ENCODE measurements at regions of chr2 and their contacts with region 1.

Region 1: DNA sequence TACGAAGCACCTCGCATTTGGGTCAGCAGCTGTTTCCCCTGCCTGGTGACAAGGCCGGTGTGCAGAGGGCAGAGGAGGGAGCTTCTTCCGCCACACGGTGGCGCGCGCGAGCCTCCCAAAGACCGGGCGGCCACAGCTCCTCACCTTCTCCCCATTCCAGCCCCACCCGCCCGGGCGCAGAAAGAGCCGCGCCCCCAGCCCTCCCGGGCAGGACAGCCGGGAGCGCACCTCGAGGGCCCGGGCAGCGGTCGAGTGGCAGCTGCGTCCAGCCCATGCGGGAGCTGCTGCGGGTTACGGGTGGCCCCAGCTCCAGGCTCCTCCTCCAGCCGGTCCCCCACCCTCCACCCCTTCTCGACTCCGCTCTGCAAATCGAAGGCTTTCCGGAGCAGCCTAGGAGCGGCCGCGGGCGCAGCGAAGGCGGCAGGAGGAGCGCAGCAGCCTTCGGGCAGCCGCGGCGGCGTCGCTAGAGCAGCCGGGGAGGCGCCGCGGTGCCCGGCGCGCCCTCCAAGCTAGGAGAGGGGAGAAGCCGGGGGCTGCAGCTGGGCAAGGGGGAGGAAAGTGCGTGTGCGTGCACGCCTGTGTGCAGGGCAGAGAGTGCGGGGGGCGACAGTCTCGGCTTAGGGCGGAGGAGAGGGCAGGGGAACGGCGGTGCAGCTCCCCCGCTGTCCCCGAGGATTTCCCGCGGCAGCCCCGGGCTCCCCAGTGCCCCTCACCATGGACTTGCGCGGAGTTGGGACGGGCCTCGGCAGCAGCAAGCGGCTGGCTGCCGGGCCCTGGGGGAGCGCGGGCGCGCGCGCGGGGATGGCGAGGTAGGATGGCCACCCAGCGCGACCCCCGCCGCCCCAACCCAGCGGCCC is at the start of gene CCDC85A:
- DNase-seq: peak; percentile 83 to 92 (median 86)
- ATAC-seq: peak; percentile 89 to 95 (median 94)
- H3K4me3 ChIP-seq: peak within 1 kb of the TSS; percentile 61 to 86 (median 74)
- H3K27ac ChIP-seq: peak within 1 kb of the TSS; percentile 69 to 94 (median 85)
- H3K4me1 ChIP-seq: peaks cover 0 to 50% (median 7%) of the 10 kb centered on the region in 12 donors
- H3K27me3 ChIP-seq: peaks cover 0 to 33% (median 3%) of the 10 kb centered on the region in 9 donors
- CTCF ChIP-seq: peak; percentile 88 to 99 (median 95)
- POLR2A ChIP-seq: peak in 1 of 2 donors; percentile 56
- total RNA-seq, gene CCDC85A: 3.3 to 14.2 (median 4.5) TPM

Region 2: GRCh38 chr2:56088411-56088810 is 95.5 kb before region 1 on chr2:
- intact Hi-C with region 1: no loop called
- DNase-seq: no peak
- ATAC-seq: no peak
- H3K4me3 ChIP-seq: no peak overlapping the region
- H3K27ac ChIP-seq: no peak overlapping the region
- H3K4me1 ChIP-seq: no peaks in the 10 kb centered on the region
- H3K27me3 ChIP-seq: no peaks in the 10 kb centered on the region
- CTCF ChIP-seq: no peak
- POLR2A ChIP-seq: no peak

Region 3: DNA sequence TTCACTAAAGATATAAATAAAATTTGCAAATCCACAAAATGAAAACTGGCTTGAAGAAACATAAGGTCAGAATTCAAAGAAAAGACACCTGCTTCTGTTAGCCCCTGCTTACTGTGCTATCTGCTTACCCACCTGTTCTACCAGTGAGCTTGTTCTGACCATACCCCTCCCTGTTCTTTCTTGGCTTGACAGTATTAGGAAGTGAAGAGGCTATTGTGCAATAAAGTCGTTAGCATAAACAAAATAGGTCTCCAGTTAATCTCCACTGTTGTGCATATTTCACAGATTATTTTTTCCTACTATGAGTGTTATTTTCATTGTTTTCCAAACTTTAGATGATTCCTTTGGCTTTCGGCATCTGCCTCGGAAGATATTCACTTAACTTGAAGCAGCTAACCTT is 322.0 kb after region 1 on chr2:
- intact Hi-C with region 1: loop called in 1 of 10 experiments (anchors 10 kb)
- DNase-seq: no peak
- ATAC-seq: no peak
- H3K4me3 ChIP-seq: no peak overlapping the region
- H3K27ac ChIP-seq: no peak overlapping the region
- H3K4me1 ChIP-seq: no peaks in the 10 kb centered on the region
- H3K27me3 ChIP-seq: no peaks in the 10 kb centered on the region
- CTCF ChIP-seq: no peak
- POLR2A ChIP-seq: no peak

Region 4: GRCh38 chr2:56580242-56580641 is 396.4 kb after region 1 on chr2:
- intact Hi-C with region 1: loop called in 1 of 10 experiments (anchors 10 kb)
- DNase-seq: no peak
- ATAC-seq: no peak
- H3K4me3 ChIP-seq: no peak overlapping the region
- H3K27ac ChIP-seq: no peak overlapping the region
- H3K4me1 ChIP-seq: no peaks in the 10 kb centered on the region
- H3K27me3 ChIP-seq: no peaks in the 10 kb centered on the region
- CTCF ChIP-seq: no peak
- POLR2A ChIP-seq: no peak

Region 5: DNA sequence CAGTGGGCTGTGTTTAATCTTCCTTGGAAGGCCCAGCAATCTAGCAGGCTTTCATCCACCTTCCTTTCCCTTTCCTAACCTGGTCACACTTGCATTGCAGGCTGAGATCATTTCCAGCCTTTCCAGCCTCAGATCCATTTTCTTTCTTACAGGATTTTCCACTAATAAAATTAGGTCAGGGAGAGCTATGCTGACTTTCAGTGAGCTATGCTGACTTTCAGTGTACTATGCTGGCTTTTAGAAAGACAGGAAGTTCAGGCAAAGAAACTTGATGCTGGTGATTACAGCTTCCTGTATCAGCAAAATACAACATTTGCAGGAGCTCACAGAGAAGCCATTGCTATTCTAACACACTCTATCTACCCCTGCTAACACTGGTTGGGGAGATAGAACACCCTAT is 734.9 kb after region 1 on chr2:
- intact Hi-C with region 1: no loop called
- DNase-seq: no peak
- ATAC-seq: no peak
- H3K4me3 ChIP-seq: no peak overlapping the region
- H3K27ac ChIP-seq: no peak overlapping the region
- H3K4me1 ChIP-seq: no peaks in the 10 kb centered on the region
- H3K27me3 ChIP-seq: no peaks in the 10 kb centered on the region
- CTCF ChIP-seq: no peak
- POLR2A ChIP-seq: no peak

Region 6: GRCh38 chr2:57497489-57498096 is 1313.7 kb after region 1 on chr2:
- intact Hi-C with region 1: loop called (anchors 1 to 10 kb)
- DNase-seq: peak in 4 of 5 donors; percentile 6 to 26 (median 24)
- ATAC-seq: peak in 2 of 4 donors; percentile 41 to 50
- H3K4me3 ChIP-seq: no peak overlapping the region
- H3K27ac ChIP-seq: no peak overlapping the region
- H3K4me1 ChIP-seq: peaks cover 0 to 12% (median 0%) of the 10 kb centered on the region in 12 donors
- H3K27me3 ChIP-seq: no peaks in the 10 kb centered on the region
- CTCF ChIP-seq: peak; percentile 62 to 80 (median 71)
- POLR2A ChIP-seq: no peak

Region 7: DNA sequence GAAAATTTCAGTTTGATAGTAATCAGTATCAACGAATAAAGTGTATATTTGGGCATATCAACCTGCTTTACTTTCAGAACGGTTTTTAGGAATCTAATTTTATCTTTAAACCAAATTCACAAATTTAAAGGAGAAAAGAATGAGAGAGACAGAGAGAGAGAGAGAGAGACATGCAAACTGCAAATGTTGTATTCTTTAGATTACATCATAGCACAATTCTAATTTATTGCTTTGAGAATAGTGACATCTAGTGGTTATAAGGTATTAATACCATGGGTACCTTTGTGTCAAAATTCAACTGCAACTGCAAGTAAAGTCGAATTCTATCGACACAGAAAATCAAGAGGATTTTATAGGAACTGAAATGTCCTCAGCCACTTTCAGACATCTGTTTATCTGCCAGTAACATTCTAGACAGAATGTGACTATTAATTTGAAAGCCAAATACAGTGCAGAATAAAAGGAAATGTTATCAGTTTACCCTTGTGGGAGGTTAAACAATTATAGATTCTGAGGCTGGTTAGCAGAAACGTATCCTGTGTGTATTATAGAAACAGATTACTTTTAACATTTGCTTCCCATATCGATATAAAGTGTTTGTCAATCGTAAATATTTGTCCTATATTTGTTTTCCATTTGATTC is 1332.9 kb after region 1 on chr2:
- intact Hi-C with region 1: loop called in 3 of 10 experiments (anchors 5 kb)
- DNase-seq: no peak
- ATAC-seq: peak in 1 of 4 donors; percentile 44
- H3K4me3 ChIP-seq: no peak overlapping the region
- H3K27ac ChIP-seq: no peak overlapping the region
- H3K4me1 ChIP-seq: no peaks in the 10 kb centered on the region
- H3K27me3 ChIP-seq: no peaks in the 10 kb centered on the region
- CTCF ChIP-seq: peak; percentile 55 to 75 (median 64)
- POLR2A ChIP-seq: no peak